ENCODE measurements at regions of chr11 and their contacts with region 1.

Region 1: GRCh38 chr11:61361686-61362541 is at the starts of genes CYB561A3 and TMEM138:
- DNase-seq: peak; percentile 91

Region 2: GRCh38 chr11:61287338-61287977 is 74.5 kb before region 1 on chr11:
- CTCF ChIA-PET with region 1: no interaction called
- POLR2A ChIA-PET with region 1: no interaction called
- DNase-seq: no peak

Region 3: DNA sequence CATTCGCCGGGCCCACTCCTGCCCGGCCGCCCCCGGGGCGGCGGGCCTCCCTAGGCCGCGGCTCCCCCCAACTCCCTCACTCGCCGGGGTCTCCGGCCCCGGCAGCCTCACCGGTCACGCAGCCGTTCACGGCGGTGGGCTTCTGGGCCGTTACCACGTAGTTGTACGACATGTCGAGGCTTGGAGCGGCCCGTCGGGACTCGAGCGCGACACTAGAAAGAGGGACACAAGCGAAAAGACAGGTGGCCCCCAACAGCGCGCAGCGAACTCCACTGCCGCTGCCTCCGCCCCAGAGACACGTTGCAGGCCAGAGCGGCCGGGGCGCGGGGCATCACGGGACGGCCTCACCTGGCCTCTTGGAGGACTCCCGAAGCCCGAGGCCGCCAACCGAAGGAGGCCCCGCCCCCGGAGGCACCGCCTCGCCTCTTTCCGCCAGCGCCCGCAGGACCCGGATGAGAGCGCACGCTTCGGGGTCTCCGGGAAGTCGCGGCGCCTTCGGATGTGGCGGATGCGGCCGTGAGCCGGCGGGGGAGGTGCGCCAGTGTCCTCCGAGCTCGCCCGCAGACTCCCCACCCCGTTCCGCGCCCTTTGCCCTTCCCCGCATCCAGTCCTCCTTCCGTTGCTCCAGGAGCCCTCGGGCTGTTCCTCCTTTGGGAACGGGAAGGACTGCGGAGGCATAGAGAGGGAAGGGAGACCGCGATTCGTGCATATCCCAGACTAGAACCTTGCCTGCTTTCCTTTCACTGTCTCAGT is 28.9 kb before region 1 on chr11 and contains the starts of genes DDB1 and TKFC:
- CTCF ChIA-PET with region 1: interaction called, 26 read pairs
- POLR2A ChIA-PET with region 1: interaction called, 103 read pairs
- DNase-seq: peak; percentile 97

Region 4: DNA sequence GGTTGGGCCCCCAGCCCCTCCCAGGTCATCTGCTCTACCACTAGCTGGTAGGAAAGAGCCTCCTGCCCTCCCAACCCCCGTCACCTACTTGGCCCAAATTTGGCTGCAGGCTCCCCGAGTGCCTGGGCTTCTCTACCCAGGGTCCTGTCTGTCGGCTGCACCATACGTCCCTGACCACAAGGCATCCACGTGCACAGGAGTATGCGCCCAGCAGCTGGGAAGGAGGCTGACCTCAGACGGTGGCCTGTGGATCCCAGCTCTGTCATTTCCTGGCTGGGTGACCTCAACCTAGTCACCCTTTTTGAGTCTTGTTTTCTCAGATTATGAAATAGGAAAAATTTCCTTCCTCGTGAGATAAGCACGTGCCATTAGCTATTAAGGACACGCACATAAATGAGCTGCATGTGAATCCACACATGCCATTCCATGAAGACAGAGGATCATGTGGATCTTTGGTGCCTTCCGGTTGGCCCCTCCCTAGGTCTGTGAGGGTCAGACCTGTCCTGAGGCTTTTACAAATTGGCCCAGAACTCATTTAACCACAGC is 13.9 kb before region 1 on chr11:
- CTCF ChIA-PET with region 1: no interaction called
- POLR2A ChIA-PET with region 1: interaction called, 50 read pairs
- DNase-seq: no peak

Region 5: GRCh38 chr11:61392981-61393595 is 31.2 kb after region 1 on chr11:
- CTCF ChIA-PET with region 1: no interaction called
- POLR2A ChIA-PET with region 1: interaction called, 35 read pairs
- DNase-seq: peak; percentile 42

Region 6: GRCh38 chr11:61733120-61733978 is 371.4 kb after region 1 on chr11:
- CTCF ChIA-PET with region 1: no interaction called
- POLR2A ChIA-PET with region 1: no interaction called
- DNase-seq: peak; percentile 95

Region 7: GRCh38 chr11:62061351-62062222 is 699.7 kb after region 1 on chr11:
- CTCF ChIA-PET with region 1: no interaction called
- POLR2A ChIA-PET with region 1: no interaction called
- DNase-seq: no peak